ENCODE measurements at regions of chr2 and their contacts with region 1.

Region 1: DNA sequence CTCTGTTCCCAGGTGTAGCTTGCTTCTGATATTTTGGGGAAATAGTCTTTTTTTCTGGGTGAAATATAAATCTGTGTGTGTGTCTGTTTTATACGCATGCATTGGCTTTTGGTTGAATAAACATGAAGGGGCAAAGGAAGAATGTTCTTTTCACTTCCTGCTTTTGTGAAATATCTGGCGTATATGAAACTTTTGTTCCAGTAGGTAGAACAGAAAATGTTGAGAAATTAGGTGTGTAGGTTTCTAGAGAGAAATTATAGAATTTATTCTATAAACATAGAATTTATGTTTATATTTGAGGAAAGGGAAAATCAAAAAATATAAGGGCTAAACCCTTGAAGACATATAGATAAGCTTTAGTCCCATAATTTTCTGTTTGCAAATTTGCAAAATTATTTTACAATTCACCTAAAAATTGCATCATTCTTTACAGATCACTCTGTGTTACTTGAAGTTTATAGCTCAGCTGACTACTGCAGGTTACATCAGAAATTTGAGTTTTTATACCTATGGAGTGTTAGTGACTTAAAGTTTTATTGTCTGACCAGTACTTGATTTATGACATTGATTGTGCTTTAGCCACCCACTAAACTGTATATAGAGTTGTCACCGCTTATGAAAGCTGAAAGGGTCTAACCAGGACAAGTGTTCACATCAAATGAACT is 116.1 kb downstream of the FAM117B start:
- DNase-seq: no peak
- H3K4me3 Mint-ChIP-seq: peak overlapping the region; percentile 48
- H3K27ac Mint-ChIP-seq: peak overlapping the region; percentile 97
- H3K4me1 Mint-ChIP-seq: peaks cover 67% of the 10 kb centered on the region
- H3K27me3 Mint-ChIP-seq: no peaks in the 10 kb centered on the region

Region 2: DNA sequence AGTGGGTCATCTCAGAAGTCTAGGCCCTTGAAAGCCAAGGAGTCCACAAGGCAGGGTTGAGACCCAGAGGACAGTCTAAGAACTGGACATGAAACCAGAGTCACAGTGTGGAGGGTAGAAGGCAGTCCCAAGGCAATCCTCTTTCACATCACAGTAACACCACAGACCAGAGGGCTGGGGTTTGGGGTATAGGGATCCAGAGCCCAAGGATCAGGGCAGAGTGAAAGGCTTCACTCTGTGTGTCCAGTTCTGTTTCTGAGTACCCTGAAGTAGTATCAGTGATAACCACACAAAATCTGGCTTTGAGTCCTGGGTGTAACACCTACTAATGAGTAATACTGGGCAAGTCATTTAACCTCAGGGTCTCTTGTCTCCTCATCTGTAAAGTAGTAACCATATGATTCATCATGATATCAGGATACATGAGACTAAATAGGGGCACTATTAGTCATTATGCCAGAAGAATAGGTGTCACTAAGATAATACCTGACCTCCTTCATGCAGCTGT is 29.7 kb after region 1 on chr2:
- CTCF ChIA-PET with region 1: no interaction called
- intact Hi-C with region 1: loop called (anchors 2 kb)
- DNase-seq: peak; percentile 18
- H3K4me3 Mint-ChIP-seq: no peak overlapping the region
- H3K27ac Mint-ChIP-seq: no peak overlapping the region
- H3K4me1 Mint-ChIP-seq: peaks cover 15% of the 10 kb centered on the region
- H3K27me3 Mint-ChIP-seq: no peaks in the 10 kb centered on the region

Measured in activated naive CD4-positive, alpha-beta T cell treated with anti-CD3 and anti-CD28 coated beads for 36 hours (primary cell).